ENCODE measurements at regions of chr1 and their contacts with region 1.

Region 1: GRCh38 chr1:28886731-28887418 is 27.5 kb upstream of the EPB41 start:
- DNase-seq: peak; percentile 90
- H3K4me3 ChIP-seq: peak overlapping the region; percentile 80 to 95 (median 90)
- H3K27ac ChIP-seq: peak overlapping the region; percentile 77 to 82 (median 81)
- H3K4me1 ChIP-seq: peaks cover 0 to 54% (median 41%) of the 10 kb centered on the region in 4 donors
- H3K27me3 ChIP-seq: no peaks in the 10 kb centered on the region
- CTCF ChIP-seq: no peak
- EP300 ChIP-seq: no peak
- POLR2A ChIP-seq: peak in 1 of 2 donors; percentile 48

Region 2: GRCh38 chr1:28736450-28737306 is 150.2 kb before region 1 on chr1 and contains the start of gene YTHDF2:
- intact Hi-C with region 1: loop called (anchors 5 kb)
- DNase-seq: peak; percentile 98
- H3K4me3 ChIP-seq: peak within 1 kb of the TSS; percentile 85 to 97 (median 92)
- H3K27ac ChIP-seq: peak within 1 kb of the TSS; percentile 96 to 97 (median 96)
- H3K4me1 ChIP-seq: peaks cover 0 to 50% (median 43%) of the 10 kb centered on the region in 4 donors
- H3K27me3 ChIP-seq: no peaks in the 10 kb centered on the region
- CTCF ChIP-seq: peak; percentile 85 to 96 (median 90)
- EP300 ChIP-seq: no peak
- POLR2A ChIP-seq: peak; percentile 86 to 87
- total RNA-seq, gene YTHDF2: 37.9 to 47.0 (median 42.7) TPM

Region 3: GRCh38 chr1:28983509-28984310 is 96.8 kb after region 1 on chr1:
- intact Hi-C with region 1: loop called (anchors 5 kb)
- DNase-seq: peak; percentile 67
- H3K4me3 ChIP-seq: no peak overlapping the region
- H3K27ac ChIP-seq: peak overlapping the region in 3 of 4 donors; percentile 34 to 53 (median 36)
- H3K4me1 ChIP-seq: peaks cover 0 to 13% (median 9%) of the 10 kb centered on the region in 4 donors
- H3K27me3 ChIP-seq: no peaks in the 10 kb centered on the region
- CTCF ChIP-seq: no peak
- EP300 ChIP-seq: no peak
- POLR2A ChIP-seq: no peak

Region 4: GRCh38 chr1:29124366-29125236 is 237.7 kb after region 1 on chr1:
- intact Hi-C with region 1: loop called (anchors 2 kb)
- DNase-seq: peak; percentile 95
- H3K4me3 ChIP-seq: peak overlapping the region; percentile 48 to 75 (median 72)
- H3K27ac ChIP-seq: peak overlapping the region; percentile 96 to 99 (median 99)
- H3K4me1 ChIP-seq: peaks cover 0 to 46% (median 44%) of the 10 kb centered on the region in 4 donors
- H3K27me3 ChIP-seq: no peaks in the 10 kb centered on the region
- CTCF ChIP-seq: peak; percentile 98 to 100 (median 98)
- EP300 ChIP-seq: peak in 3 of 4 donors; percentile 23 to 75 (median 29)
- POLR2A ChIP-seq: peak; percentile 83 to 93

Region 5: GRCh38 chr1:29202584-29203340 is 315.9 kb after region 1 on chr1:
- intact Hi-C with region 1: loop called (anchors 2 kb)
- DNase-seq: peak; percentile 98
- H3K4me3 ChIP-seq: no peak overlapping the region
- H3K27ac ChIP-seq: peak overlapping the region; percentile 79 to 87 (median 84)
- H3K4me1 ChIP-seq: peaks cover 0 to 13% (median 12%) of the 10 kb centered on the region in 4 donors
- H3K27me3 ChIP-seq: no peaks in the 10 kb centered on the region
- CTCF ChIP-seq: peak; percentile 89 to 96 (median 92)
- EP300 ChIP-seq: no peak
- POLR2A ChIP-seq: no peak

Measured in sigmoid colon (tissue), 7 donors.